HEK293T (cell line): ENCODE measurements at regions of chr16 and their contacts with region 1.

Region 1: DNA sequence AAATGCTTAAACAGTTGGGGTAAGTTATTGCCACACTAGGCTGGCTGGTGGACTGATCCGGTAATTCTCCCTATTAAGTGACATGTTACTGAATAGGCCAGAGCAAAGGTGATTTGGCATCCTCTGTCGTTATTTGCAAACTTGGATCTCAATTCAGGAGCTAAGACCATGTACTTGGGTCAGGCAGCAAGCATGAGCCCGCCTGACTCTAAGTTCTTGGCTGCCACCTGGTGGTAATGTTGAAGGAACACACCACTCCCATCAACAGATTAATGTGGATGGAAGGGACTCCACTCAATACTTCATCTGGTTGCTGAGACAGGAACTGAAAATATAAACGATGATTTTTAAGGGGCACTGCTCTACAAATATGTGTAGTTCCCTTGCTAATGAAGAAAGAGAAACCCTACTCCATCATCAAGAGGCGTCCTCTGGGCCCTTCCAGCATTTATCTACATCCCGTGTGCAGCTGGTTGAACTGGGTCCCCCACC is 70.8 kb downstream of the EMP2 start:
- DNase-seq: peak; percentile 74

Region 2: DNA sequence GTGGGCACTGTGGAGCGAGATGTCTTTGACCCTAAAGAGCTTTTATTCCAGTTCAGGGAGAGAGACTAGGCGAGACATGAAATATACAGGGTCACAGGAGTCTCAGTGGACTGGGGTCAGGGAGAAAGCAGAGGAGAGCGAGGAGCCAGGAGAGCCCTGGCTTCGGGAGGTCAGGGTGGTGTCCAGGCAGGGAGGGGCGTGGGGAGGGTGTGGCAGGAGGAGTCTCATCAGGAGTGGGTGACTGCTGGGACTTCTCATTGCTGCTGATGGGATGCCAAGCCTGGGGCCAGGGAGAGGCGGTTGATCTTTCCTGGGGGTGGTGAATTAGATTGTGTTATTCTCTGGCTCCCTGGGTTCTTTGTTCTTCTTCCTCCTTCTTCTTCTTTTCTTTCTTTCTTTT is 1523.5 kb before region 1 on chr16:
- CTCF ChIA-PET with region 1: no interaction called
- POLR2A ChIA-PET with region 1: no interaction called
- DNase-seq: no peak

Region 3: GRCh38 chr16:10314811-10315210 is 194.8 kb before region 1 on chr16:
- CTCF ChIA-PET with region 1: interaction called, 10 read pairs
- POLR2A ChIA-PET with region 1: no interaction called
- DNase-seq: no peak

Region 4: DNA sequence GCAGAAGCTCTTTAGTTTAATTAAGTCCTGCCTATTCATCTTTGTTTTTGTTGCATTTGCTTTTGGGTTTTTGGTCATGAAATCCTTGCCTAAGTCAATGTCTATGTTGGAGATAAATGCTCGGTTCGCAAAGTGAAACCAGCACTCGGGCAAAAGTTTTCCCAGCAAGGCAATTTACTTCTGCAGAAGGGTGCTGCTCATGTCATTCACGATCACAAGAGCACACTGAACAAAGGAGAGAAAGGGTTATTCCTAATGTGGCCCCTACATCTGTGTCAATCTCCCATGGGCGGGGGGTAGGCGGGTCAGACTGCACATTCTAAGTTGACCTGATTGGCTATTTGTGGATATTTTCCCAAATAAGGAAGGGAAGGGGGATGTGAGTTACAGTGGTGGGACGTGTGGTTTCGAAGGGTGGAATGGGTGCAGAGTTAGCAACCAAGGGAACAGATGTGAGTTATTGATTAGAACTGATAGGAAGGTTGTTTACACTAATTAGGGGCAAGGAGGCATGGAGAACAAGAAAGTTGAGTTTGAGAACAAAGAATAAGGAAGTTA is 100.7 kb before region 1 on chr16:
- CTCF ChIA-PET with region 1: no interaction called
- POLR2A ChIA-PET with region 1: no interaction called
- DNase-seq: no peak

Region 5: DNA sequence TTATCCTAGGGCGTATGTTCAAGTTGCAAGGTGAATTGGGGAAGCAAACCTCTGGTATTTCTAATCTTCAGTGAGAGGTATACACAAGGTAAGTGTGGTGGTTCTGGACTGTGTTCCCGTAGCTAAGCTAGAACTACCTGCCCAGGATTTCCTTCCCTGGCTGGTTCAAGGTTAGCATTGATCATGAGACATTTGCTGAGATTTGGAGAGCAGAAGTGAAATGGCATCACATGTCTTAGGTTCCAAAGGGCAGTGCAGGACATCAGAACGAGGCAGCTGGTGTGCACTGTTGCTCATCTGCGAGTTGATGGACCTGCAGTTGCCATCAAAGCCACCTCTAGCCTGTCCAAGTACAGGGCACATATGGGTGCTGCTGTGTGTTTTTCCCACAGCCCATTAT is 24.4 kb before region 1 on chr16:
- CTCF ChIA-PET with region 1: interaction called, 11 read pairs
- POLR2A ChIA-PET with region 1: no interaction called
- DNase-seq: no peak

Region 6: DNA sequence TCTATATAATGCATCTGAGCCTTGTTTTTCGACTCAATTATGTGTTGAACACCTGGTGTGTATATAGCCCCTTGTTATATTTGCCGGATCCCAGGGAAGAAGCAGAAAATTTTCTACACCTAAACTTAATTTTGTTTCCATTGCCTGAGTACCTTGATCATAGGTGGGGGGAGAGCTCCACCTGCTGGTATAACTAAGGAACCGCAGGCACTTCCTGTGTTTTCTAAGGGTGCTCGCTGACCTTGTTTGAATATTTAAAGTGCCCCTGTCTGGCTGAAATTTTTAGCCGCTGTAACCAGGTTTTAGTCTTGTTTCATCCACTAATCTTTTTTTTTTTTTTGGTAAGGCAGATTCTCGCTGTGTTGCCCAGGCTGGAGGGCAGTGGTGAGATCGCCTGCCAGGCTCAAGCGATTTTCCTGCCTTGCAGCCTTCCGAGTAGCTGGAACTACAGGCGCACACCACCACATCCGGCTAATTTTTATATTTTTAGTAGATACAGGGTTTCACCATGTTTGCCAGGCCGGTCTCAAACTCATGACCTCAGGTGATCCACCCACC is 227.6 kb after region 1 on chr16:
- CTCF ChIA-PET with region 1: interaction called, 21 read pairs
- POLR2A ChIA-PET with region 1: no interaction called
- DNase-seq: peak; percentile 66